ENCODE measurements at regions of chr17 and their contacts with region 1.

Region 1: GRCh38 chr17:80426681-80427326 is 11.8 kb downstream of the ENDOV start:
- DNase-seq: peak; percentile 97
- H3K4me3 Mint-ChIP-seq: no peak overlapping the region
- H3K27ac Mint-ChIP-seq: no peak overlapping the region
- H3K4me1 Mint-ChIP-seq: peaks cover 13% of the 10 kb centered on the region
- H3K27me3 Mint-ChIP-seq: no peaks in the 10 kb centered on the region

Region 2: DNA sequence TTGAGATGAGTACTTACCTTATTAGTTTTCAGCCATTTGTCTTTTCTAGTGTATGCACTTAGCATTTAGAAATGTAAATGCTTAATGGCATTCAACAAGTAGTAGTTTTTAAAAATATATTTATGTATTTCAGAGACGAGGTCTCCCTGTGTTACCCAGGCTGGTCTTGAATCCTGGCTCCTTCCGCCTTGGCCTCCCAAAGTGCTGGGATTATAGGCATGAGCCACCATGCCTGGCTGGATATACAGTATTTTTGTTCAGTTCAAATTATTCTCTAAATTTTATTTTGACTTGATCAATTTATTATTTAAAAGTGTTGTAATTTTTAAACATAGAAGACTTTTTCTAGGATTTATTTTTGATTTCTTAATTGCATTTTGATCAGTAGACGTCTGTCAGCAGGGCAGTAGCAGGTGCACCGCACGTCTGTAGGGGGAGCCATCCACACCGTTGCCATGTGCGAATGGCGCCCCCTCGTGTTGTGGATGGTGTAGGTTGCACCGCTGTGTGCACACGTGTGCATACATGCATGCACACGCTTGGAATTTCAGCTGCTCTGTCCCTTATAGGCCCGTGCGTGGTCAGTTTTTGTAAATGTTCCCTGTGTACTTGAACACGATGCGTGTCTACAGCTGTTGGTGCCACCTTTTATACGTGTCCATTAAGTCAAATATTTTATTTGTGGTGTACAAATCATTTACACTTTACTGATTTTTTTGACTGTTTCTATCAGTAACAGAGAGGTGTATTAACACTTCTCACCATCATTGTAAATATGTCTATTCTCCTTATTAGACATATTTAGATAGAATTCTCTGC is 148.5 kb after region 1 on chr17:
- intact Hi-C with region 1: loop called (anchors 1 kb)
- DNase-seq: peak; percentile 97
- H3K4me3 Mint-ChIP-seq: no peak overlapping the region
- H3K27ac Mint-ChIP-seq: no peak overlapping the region
- H3K4me1 Mint-ChIP-seq: peaks cover 27% of the 10 kb centered on the region
- H3K27me3 Mint-ChIP-seq: no peaks in the 10 kb centered on the region

Region 3: DNA sequence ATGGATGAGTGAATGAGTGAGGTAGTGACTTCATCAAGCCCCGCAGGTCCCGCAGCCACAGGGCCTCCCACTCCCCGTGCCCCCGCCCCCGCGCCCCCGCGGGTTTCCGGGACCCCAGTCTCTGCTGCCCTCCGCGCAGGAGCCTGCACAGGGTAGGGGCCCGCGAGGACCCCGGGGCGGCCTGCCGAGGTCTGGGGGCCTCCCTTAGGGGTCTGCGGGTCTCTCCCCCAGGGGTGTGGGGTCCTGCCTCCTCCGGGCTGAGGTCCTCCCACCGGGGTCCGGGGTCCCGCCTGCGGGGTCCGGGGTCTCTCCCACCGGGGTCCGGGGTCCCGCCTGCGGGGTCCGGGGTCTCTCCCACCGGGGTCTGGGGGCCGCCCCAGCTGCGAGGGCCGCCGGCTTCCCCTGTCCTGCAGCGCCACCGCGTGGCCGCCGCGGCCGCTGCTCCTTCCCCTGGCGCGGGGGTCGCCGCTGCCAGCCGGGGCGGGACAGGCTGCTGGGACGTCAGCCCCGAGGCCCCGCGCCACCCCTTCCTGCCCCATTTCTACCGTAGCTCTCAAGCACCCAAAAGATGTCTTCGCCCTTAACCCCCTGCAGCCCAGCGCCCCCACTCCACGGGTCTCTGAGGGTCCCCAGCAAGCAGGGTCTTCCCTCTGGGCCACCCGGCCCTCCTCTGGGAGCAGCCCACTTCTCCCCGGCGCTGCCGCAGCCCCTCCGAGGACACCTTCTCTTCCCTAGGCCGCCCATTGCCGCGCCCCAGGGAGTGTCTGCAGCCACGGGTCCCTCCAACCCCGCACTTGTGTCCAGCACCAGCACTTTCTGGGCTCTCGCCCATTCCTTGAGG is 554.5 kb after region 1 on chr17:
- intact Hi-C with region 1: loop called (anchors 1 kb)
- DNase-seq: peak; percentile 84
- H3K4me3 Mint-ChIP-seq: peak overlapping the region; percentile 38
- H3K27ac Mint-ChIP-seq: peak overlapping the region; percentile 54
- H3K4me1 Mint-ChIP-seq: peaks cover 8% of the 10 kb centered on the region
- H3K27me3 Mint-ChIP-seq: peaks cover 8% of the 10 kb centered on the region

Region 4: GRCh38 chr17:81101614-81102306 is 675.0 kb after region 1 on chr17:
- intact Hi-C with region 1: loop called (anchors 5 kb)
- DNase-seq: peak; percentile 97
- H3K4me3 Mint-ChIP-seq: no peak overlapping the region
- H3K27ac Mint-ChIP-seq: no peak overlapping the region
- H3K4me1 Mint-ChIP-seq: peaks cover 2% of the 10 kb centered on the region
- H3K27me3 Mint-ChIP-seq: no peaks in the 10 kb centered on the region